BJ (cell line): ENCODE measurements at regions of chr1 and their contacts with region 1.

Region 1: GRCh38 chr1:24909388-24909898 is 20.6 kb downstream of the RUNX3 start:
- DNase-seq: no peak
- H3K4me3 ChIP-seq: no peak overlapping the region
- H3K27me3 ChIP-seq: no peaks in the 10 kb centered on the region
- CTCF ChIP-seq: peak; percentile 54

Region 2: GRCh38 chr1:24897767-24898483 is 11.5 kb before region 1 on chr1:
- CTCF ChIA-PET with region 1: interaction called, 39 read pairs
- POLR2A ChIA-PET with region 1: no interaction called
- DNase-seq: no peak
- H3K4me3 ChIP-seq: no peak overlapping the region
- H3K27me3 ChIP-seq: peaks cover 3% of the 10 kb centered on the region; the same call in 1 of the 2 replicates
- CTCF ChIP-seq: peak; percentile 93

Region 3: GRCh38 chr1:24930204-24931145 is 21.0 kb after region 1 on chr1 and contains the start of gene RUNX3:
- CTCF ChIA-PET with region 1: interaction called, 11 read pairs
- POLR2A ChIA-PET with region 1: no interaction called
- DNase-seq: no peak
- H3K4me3 ChIP-seq: peak within 1 kb of the TSS; percentile 44
- H3K27me3 ChIP-seq: peaks cover 52% of the 10 kb centered on the region
- CTCF ChIP-seq: no peak
- polyA plus RNA-seq, gene RUNX3: 0.23 and 0.54 TPM in 2 replicates